GM10248 (cell line): ENCODE measurements at regions of chr7 and their contacts with region 1.

Region 1: DNA sequence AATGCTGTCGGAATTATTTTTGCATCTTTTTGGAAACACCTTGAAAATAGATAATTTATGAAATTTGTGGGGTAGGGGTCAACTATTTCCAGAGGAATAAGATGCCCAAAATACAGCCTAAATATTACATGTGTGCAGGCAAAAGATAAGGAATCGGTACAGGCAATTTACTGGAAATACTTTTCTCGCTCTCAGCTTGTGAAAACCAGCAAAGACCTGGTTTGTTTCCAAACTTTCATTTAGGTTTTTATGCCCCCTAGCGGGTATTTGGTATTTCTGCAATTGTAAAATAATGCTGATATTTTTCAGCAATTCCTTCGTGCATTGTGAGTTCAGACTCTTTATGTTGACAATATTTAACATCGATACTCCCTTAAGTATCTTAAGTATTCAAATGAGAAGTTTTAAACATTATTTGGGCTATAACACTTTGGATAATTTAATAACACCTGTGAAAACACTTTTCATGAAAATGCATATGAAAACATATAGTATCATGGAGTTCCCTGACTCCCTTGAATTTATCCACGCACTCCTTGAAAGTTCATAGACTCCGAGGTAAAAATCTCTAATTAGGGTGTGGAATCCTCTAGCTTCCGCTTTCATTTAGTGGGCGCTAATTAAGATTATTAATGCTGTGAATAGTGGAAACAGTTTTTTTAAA is 132.4 kb downstream of the TSPAN12 start:
- DNase-seq: peak; percentile 28
- CTCF ChIP-seq: peak; percentile 42

Region 2: DNA sequence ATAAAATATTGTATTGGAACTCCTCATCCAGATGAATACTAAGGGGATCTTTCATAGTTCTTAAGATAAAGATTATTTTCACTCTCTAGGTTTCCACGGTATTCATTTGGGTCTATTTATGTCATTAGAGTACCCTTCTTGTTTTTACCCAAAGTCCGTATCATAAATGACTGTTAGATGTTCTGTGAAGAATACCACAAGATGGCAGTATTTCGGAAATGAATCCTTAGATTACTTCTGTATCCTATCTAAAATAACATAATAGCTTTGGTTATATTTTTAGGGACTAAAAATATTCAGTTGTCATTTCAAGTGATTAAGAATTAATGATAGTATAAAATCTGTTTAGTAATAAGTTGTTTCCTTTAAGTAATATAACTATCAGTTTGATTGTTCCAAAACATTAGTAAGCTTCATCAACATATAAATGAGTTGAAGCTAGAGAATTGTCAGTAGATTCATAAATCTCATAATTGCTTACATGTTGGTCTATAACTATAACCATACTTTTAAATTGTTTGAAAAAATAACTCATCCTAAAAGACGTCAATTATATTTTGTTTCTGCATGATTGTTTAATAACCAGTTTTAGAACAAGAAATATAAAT is 790.0 kb before region 1 on chr7:
- CTCF ChIA-PET with region 1: interaction called, 14 read pairs
- POLR2A ChIA-PET with region 1: no interaction called
- DNase-seq: peak; percentile 11
- CTCF ChIP-seq: peak; percentile 32

Region 3: GRCh38 chr7:120628251-120628650 is 97.3 kb before region 1 on chr7:
- CTCF ChIA-PET with region 1: no interaction called
- POLR2A ChIA-PET with region 1: no interaction called
- DNase-seq: no peak
- CTCF ChIP-seq: no peak

Region 4: GRCh38 chr7:120645966-120646365 is 79.5 kb before region 1 on chr7:
- CTCF ChIA-PET with region 1: no interaction called
- POLR2A ChIA-PET with region 1: no interaction called
- DNase-seq: no peak
- CTCF ChIP-seq: no peak

Region 5: GRCh38 chr7:120709972-120710320 is 15.6 kb before region 1 on chr7:
- CTCF ChIA-PET with region 1: interaction called, 72 read pairs
- POLR2A ChIA-PET with region 1: no interaction called
- DNase-seq: no peak
- CTCF ChIP-seq: no peak

Region 6: GRCh38 chr7:120740348-120740747 is 14.8 kb after region 1 on chr7:
- CTCF ChIA-PET with region 1: interaction called, 22 read pairs
- POLR2A ChIA-PET with region 1: no interaction called
- DNase-seq: no peak
- CTCF ChIP-seq: no peak